Activated T-helper 2 cell treated with anti-CD3 and anti-CD28 coated beads, Interferon-gamma antibody, Interleukin-2, Interleukin-4, amounts not matched to agents 10 μg/mL and 5 μg/mL and 100 μg/mL, durations not matched to agents 14 hours and 24 hours and 36 hours (primary cell): ENCODE measurements at regions of chr1 and their contacts with region 1.

Region 1: DNA sequence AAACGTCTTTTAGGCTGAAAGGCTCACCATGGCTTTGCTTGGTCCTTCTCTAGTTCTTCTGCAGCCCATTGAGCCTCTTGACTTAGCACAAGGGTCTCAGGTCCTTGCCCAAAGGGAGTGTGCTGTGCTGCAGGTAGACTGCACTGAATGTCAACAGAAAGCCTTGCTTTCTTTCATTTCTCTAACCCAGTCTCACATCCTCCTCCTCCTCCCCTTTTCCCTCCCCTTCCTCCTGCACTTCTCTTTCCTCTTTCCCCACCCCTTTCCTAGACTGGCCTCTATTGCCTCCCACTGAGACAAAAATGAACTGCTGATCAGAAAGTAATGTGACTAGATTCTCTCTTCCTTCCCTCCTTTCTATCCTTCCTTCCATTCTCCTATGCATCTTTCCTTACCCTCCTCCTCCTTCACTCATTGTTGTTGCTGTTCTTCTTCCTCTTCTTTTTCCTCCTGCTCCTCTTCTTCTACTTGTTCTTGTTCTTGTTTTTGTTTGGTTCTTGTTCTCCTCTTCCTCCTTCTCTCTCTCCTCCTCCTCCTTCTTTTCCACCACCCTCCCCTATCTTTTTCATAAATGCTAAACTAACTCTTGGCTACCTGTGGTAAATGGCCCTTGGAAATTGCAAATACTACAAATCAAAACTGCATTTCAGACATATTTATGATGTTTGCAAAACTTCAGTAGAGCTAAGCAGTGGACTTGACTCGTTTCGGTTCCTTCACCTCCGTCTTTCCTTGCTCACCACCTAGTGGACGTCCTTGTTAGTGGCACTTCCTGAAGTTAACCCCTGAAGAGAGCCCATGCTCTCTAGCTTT is at the start of gene SELL:
- DNase-seq: peak; percentile 73
- H3K4me3 Mint-ChIP-seq: peak within 1 kb of the TSS; percentile 74
- H3K27ac Mint-ChIP-seq: peak within 1 kb of the TSS; percentile 87
- H3K4me1 Mint-ChIP-seq: peaks cover 31% of the 10 kb centered on the region
- H3K27me3 Mint-ChIP-seq: peaks cover 18% of the 10 kb centered on the region
- total RNA-seq, gene SELL: 63.0 and 64.9 TPM in 2 replicates

Region 2: GRCh38 chr1:169367486-169368405 is 343.9 kb before region 1 on chr1 and contains the starts of genes BLZF1 and NME7:
- intact Hi-C with region 1: no loop called
- DNase-seq: peak; percentile 98
- H3K4me3 Mint-ChIP-seq: peak within 1 kb of the TSS; percentile 67
- H3K27ac Mint-ChIP-seq: peak within 1 kb of the TSS; percentile 21
- H3K4me1 Mint-ChIP-seq: peaks cover 35% of the 10 kb centered on the region
- H3K27me3 Mint-ChIP-seq: no peaks in the 10 kb centered on the region
- total RNA-seq, gene BLZF1: 11.8 and 11.9 TPM in 2 replicates
- total RNA-seq, gene NME7: 14.1 and 23.4 TPM in 2 replicates

Region 3: DNA sequence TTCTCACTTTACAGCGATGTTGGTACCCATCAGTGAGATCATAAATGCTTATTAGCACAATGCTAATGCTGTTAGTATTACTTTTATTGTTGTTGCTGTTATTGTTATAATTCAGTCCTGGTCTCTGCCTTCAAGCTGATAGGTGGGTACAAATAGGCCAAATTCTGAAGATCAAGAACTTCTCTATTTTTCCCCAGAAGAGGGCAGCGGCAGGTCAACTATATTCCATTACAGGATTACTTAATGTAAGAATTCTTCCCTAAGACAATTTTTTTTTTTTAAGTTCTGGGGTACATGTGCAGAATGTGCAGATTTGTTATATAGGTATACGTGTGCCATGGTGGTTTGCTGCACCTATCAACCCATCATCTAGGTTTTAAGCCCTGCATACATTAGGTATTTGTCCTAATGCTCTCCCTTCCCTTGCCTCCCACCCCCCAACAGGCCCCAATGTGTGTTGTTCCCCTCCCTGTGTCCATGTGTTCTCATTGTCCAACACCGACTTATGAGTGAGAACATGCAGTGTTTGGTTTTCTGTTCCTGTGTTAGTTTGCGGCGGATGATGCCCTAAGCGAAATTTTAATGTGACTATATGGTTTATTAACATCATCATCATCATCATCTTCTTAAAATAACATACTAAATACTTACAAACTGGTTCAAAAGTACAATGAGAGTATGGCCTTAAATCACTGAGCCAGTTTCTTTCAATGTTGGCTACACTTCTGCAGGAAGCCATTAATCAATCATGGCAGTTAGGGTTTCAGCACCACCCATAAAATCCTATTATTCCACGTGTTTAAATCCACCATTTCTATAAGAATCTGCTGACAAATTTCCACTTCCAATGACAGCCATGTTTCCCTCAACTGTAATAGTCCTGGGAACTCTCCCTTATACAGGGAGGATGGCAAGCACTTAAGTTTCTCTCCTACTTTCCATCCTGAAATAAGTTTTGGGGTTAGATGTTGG is 245.1 kb before region 1 on chr1:
- intact Hi-C with region 1: loop called (anchors 5 kb)
- DNase-seq: no peak
- H3K4me3 Mint-ChIP-seq: no peak overlapping the region
- H3K27ac Mint-ChIP-seq: no peak overlapping the region
- H3K4me1 Mint-ChIP-seq: peaks cover 6% of the 10 kb centered on the region
- H3K27me3 Mint-ChIP-seq: no peaks in the 10 kb centered on the region

Region 4: DNA sequence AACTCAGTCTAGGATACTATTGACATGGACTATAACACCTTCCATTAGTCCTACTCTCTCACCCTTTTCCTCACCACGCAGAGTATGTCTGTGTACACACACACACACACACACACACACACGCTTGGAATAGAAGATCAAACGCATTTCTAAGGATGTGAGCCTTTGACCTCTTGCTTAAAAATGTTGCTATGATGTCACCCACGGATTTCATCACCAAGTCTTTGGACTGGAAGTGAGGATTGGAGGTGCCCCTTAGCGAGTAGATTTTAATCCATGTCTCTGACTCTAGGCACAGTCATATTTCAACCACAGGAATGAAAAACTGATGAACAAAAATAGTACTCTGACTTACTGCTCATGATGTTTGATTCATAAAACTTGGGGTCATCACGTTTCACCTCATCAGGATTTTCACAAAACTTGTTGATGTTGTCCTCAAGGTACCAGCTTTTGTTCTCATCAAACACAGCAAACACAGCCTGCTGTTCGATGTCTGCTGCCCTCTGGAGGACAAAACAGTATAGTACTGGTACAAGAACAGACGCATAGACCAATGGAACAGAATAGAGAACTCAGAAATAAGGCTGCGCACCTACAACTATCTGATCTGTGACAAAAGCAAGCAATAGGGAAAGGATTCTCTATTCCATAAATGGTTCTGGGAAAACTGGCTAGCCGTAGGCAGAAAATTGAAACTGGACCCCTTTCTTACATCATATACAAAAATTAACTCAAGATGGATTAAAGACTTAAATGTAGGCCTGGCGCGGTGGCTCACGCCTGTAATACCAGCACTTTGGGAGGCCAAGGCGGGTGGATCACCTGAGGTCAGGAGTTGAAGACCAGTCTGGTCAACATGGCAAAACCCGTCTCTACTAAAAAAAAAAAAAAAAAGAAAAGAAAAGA is 165.3 kb before region 1 on chr1:
- intact Hi-C with region 1: loop called (anchors 1 kb)
- DNase-seq: peak; percentile 36
- H3K4me3 Mint-ChIP-seq: no peak overlapping the region
- H3K27ac Mint-ChIP-seq: peak overlapping the region; percentile 28
- H3K4me1 Mint-ChIP-seq: peaks cover 9% of the 10 kb centered on the region
- H3K27me3 Mint-ChIP-seq: no peaks in the 10 kb centered on the region

Region 5: GRCh38 chr1:169586395-169587255 is 125.0 kb before region 1 on chr1 and contains the start of gene F5:
- intact Hi-C with region 1: loop called (anchors 1 kb)
- DNase-seq: peak; percentile 69
- H3K4me3 Mint-ChIP-seq: peak within 1 kb of the TSS; percentile 89
- H3K27ac Mint-ChIP-seq: peak within 1 kb of the TSS; percentile 83
- H3K4me1 Mint-ChIP-seq: peaks cover 59% of the 10 kb centered on the region
- H3K27me3 Mint-ChIP-seq: no peaks in the 10 kb centered on the region
- total RNA-seq, gene F5: 25.0 and 26.0 TPM in 2 replicates

Region 6: DNA sequence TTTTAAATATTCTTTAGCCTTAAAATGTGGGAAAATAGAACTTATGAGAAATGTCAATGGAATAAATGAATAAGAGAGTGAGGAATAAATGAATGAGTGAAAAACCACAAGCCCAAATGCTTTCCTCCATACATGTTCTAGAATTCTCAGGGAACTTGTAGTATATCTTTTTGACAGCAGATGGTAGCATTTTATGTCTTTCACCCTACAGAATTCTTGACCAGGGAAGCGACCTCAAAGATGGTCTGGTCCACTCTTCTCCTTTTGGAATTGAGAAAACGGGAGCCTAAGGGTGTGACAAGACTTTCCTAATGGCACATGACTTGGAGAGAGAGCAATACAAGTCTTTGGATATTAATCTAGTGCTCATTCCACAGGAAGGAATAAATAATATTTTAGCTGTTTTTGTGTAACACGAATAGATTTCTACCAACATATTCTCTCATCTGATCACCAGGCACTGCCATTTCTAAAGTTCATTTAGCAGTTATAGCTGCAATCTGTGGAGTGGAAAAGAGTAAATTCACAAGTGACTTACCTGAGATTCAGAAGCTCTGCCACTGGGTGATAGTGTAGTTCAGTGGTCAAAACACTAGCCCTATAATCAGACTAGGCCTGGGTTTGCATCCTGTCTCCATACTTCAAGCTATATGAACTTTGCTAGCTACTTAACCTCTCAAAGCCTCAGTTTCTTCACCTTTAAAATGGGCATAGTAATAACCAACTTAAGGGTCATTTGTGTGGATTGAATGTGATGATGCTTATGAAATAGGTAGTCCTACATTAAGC is 110.4 kb before region 1 on chr1:
- intact Hi-C with region 1: loop called (anchors 1 kb)
- DNase-seq: no peak
- H3K4me3 Mint-ChIP-seq: no peak overlapping the region
- H3K27ac Mint-ChIP-seq: no peak overlapping the region
- H3K4me1 Mint-ChIP-seq: peaks cover 42% of the 10 kb centered on the region
- H3K27me3 Mint-ChIP-seq: no peaks in the 10 kb centered on the region

Region 7: GRCh38 chr1:169794530-169795416 is 83.1 kb after region 1 on chr1 and contains the start of gene METTL18:
- intact Hi-C with region 1: loop called (anchors 5 kb)
- DNase-seq: peak; percentile 92
- H3K4me3 Mint-ChIP-seq: peak within 1 kb of the TSS; percentile 92
- H3K27ac Mint-ChIP-seq: peak within 1 kb of the TSS; percentile 98
- H3K4me1 Mint-ChIP-seq: peaks cover 51% of the 10 kb centered on the region
- H3K27me3 Mint-ChIP-seq: no peaks in the 10 kb centered on the region
- total RNA-seq, gene METTL18: 8.9 and 10.9 TPM in 2 replicates